Activated CD8-positive, alpha-beta T cell treated with anti-CD3 and anti-CD28 coated beads for 36 hours (primary cell): ENCODE measurements at regions of chr10 and their contacts with region 1.

Region 1: DNA sequence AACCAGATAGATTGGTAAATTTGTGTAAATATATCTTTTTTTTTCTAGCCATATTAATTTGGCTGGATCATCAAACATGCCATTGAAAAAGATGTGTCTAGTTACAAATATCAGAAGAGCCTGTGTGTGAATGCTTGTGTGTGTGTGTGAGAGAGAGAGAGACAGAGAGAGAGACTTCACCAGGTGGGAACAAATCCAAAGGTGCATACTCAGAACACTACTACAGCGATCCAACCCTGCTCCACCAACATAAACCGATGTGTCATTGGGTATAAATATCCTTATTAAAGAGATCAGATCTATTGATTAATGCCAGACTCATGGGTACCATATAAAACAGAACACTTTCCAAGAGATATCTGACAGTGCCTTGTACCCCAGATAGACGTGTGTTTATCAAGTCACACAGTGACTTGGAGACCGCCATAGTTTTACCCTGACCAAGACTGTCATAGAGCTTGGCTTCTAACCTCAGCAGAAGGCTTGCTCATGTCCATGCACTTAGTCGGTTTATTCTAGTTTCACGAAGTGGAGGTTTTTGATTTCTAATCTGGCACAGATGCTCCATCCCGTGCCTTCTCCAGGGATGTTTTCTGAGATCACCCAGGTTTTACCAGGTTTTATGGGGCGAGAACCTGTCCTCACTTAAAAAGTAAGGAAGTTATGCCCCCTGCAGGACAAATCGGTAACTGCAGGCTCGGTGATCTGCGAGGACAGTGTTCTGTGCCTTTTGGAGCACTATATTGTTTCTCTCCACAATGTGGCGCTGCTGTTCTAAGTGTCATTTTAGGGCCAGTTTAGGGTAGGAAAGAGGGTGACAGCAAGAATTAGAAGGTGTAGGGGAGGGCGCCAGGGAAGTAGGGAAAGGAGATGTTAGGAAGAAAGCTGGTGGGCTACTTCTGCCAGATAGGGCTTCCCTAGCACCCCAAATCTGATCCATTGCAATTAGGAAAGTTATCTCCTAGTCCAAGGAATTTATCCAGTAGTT is 29.3 kb upstream of the WNT8B start:
- DNase-seq: peak; percentile 100
- ATAC-seq: peak; percentile 99
- H3K4me3 Mint-ChIP-seq: no peak overlapping the region
- H3K27ac Mint-ChIP-seq: no peak overlapping the region
- H3K4me1 Mint-ChIP-seq: peaks cover 4% of the 10 kb centered on the region
- H3K27me3 Mint-ChIP-seq: no peaks in the 10 kb centered on the region
- CTCF ChIP-seq: peak; percentile 96

Region 2: GRCh38 chr10:100327007-100327717 is 106.4 kb before region 1 on chr10:
- CTCF ChIA-PET with region 1: interaction called, 292 read pairs
- POLR2A ChIA-PET with region 1: interaction called, 3 read pairs
- intact Hi-C with region 1: no loop called
- DNase-seq: peak; percentile 73
- ATAC-seq: peak; percentile 99
- H3K4me3 Mint-ChIP-seq: no peak overlapping the region
- H3K27ac Mint-ChIP-seq: peak overlapping the region; percentile 81
- H3K4me1 Mint-ChIP-seq: peaks cover 17% of the 10 kb centered on the region
- H3K27me3 Mint-ChIP-seq: no peaks in the 10 kb centered on the region
- CTCF ChIP-seq: no peak

Region 3: GRCh38 chr10:100346765-100347567 is 86.6 kb before region 1 on chr10 and contains the start of gene SCD:
- CTCF ChIA-PET with region 1: interaction called, 292 read pairs
- POLR2A ChIA-PET with region 1: interaction called, 7 read pairs
- intact Hi-C with region 1: loop called (anchors 1 kb)
- DNase-seq: peak; percentile 94
- ATAC-seq: peak; percentile 90
- H3K4me3 Mint-ChIP-seq: peak within 1 kb of the TSS; percentile 99
- H3K27ac Mint-ChIP-seq: peak within 1 kb of the TSS; percentile 94
- H3K4me1 Mint-ChIP-seq: peaks cover 50% of the 10 kb centered on the region
- H3K27me3 Mint-ChIP-seq: no peaks in the 10 kb centered on the region
- CTCF ChIP-seq: no peak
- total RNA-seq, gene SCD: 271 TPM

Region 4: DNA sequence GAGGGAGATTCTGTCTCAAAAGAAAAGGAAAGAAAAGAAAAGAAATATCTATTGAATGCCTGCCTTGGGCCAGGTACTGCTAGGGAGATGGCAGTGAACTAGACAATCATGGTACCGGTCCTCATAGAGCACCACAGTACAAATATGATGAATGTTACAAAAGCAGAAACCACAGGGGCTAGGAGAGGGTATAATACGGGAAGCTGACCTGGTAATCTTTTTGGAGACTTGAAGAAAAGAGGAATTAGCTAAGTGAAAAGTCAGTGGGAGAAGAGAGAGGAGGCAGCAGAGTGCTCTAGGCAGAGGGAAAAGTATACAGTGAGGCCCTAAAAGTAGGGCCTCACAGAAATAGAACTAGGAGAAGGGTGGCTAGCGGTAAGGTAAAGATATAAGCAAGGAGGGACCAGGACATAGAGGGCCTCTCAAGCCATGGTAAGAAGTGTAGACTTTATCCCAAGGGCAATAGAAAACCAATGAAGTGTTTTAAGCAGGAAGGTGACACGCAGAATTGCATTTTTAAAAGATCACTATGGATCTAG is 13.6 kb before region 1 on chr10:
- CTCF ChIA-PET with region 1: interaction called, 10 read pairs
- POLR2A ChIA-PET with region 1: interaction called, 3 read pairs
- intact Hi-C with region 1: no loop called
- DNase-seq: no peak
- ATAC-seq: no peak
- H3K4me3 Mint-ChIP-seq: no peak overlapping the region
- H3K27ac Mint-ChIP-seq: no peak overlapping the region
- H3K4me1 Mint-ChIP-seq: no peaks in the 10 kb centered on the region
- H3K27me3 Mint-ChIP-seq: peaks cover 2% of the 10 kb centered on the region
- CTCF ChIP-seq: no peak

Region 5: DNA sequence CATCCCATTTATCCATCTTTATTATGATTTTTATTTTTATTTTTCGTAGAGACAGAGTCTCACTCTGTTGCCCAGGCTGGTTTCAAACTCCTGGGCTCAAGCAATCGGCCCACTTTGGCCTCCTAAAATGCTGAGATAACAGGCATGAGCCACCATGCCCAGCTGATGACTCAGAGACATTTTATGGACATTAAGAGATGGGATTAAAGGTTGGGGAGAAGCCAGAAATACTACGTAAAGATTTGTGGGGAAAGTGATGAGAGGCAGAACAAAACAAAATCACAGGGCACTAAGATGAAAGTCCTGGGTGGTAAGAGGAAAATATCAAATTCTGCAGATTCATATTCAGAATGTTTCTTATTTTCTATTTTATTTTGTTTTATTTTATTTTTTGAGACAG is 36.8 kb after region 1 on chr10:
- CTCF ChIA-PET with region 1: interaction called, 22 read pairs
- POLR2A ChIA-PET with region 1: no interaction called
- intact Hi-C with region 1: no loop called
- DNase-seq: no peak
- ATAC-seq: no peak
- H3K4me3 Mint-ChIP-seq: no peak overlapping the region
- H3K27ac Mint-ChIP-seq: no peak overlapping the region
- H3K4me1 Mint-ChIP-seq: no peaks in the 10 kb centered on the region
- H3K27me3 Mint-ChIP-seq: peaks cover 3% of the 10 kb centered on the region
- CTCF ChIP-seq: no peak

Region 6: DNA sequence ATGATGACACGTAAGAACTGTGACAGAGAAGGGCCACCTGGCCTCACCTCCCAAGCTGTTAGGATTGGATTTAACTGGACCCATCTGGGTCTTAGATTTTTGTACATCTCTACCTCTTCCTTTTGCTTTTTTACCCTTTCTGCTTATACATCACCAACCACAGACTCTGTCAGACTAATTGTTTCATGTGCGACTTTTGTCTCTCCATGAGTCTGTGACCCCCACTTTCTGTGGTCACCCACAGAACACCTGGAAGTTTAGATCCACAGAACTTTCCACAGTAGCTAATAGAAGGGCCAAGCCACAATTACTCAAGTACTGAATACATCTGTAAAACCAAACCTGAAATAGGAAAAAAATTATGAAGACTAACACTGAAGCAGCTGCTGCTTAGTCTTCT is 63.0 kb after region 1 on chr10:
- CTCF ChIA-PET with region 1: interaction called, 13 read pairs
- POLR2A ChIA-PET with region 1: no interaction called
- intact Hi-C with region 1: no loop called
- DNase-seq: peak; percentile 50
- ATAC-seq: peak; percentile 60
- H3K4me3 Mint-ChIP-seq: no peak overlapping the region
- H3K27ac Mint-ChIP-seq: peak overlapping the region; percentile 23
- H3K4me1 Mint-ChIP-seq: peaks cover 17% of the 10 kb centered on the region
- H3K27me3 Mint-ChIP-seq: no peaks in the 10 kb centered on the region
- CTCF ChIP-seq: no peak

Region 7: GRCh38 chr10:100518761-100519241 is 85.3 kb after region 1 on chr10:
- CTCF ChIA-PET with region 1: interaction called, 153 read pairs
- POLR2A ChIA-PET with region 1: interaction called, 4 read pairs
- intact Hi-C with region 1: no loop called
- DNase-seq: peak; percentile 82
- ATAC-seq: peak; percentile 86
- H3K4me3 Mint-ChIP-seq: no peak overlapping the region
- H3K27ac Mint-ChIP-seq: peak overlapping the region; percentile 52
- H3K4me1 Mint-ChIP-seq: peaks cover 18% of the 10 kb centered on the region
- H3K27me3 Mint-ChIP-seq: no peaks in the 10 kb centered on the region
- CTCF ChIP-seq: peak; percentile 97

Region 8: GRCh38 chr10:100662067-100662466 is 228.5 kb after region 1 on chr10:
- CTCF ChIA-PET with region 1: no interaction called
- POLR2A ChIA-PET with region 1: no interaction called
- intact Hi-C with region 1: no loop called
- DNase-seq: no peak
- ATAC-seq: no peak
- H3K4me3 Mint-ChIP-seq: no peak overlapping the region
- H3K27ac Mint-ChIP-seq: no peak overlapping the region
- H3K4me1 Mint-ChIP-seq: peaks cover 6% of the 10 kb centered on the region
- H3K27me3 Mint-ChIP-seq: peaks cover 55% of the 10 kb centered on the region
- CTCF ChIP-seq: no peak

Region 9: DNA sequence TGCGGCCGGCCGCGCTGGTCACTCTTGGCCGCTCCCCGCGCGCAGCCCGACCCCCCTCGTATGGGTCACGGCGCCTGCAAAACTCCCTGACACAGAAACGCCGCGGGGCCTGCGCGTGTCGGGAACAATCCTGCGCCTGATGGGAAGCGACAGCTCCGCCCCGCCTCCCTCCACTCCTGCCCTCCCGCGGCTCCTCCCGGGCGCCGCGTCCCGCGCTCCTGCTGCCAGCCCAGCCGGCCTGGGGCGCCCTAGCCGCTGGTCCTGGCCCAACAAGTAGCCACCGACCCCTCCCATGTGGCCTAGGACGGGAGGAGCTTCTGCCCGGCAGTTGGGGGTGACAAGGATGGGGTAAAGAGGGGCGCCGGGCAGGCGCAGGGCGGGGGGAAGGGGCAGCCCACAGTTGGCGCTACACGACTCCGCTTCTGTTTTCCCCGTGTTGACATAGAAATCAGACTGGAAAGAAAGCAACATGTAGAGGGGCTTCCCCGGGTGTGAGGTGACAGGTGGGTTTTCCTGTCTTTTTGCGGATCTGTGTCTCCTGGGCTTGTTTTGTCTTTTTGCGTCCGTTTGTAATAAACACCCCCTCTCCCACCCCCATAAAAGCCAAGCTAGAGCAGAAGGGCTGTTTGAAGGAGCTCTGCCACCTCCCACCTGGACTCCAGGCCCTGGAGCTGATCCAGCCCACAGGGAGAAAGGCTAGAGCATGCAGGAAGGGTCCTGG is 276.8 kb after region 1 on chr10:
- CTCF ChIA-PET with region 1: no interaction called
- POLR2A ChIA-PET with region 1: no interaction called
- intact Hi-C with region 1: no loop called
- DNase-seq: no peak
- ATAC-seq: no peak
- H3K4me3 Mint-ChIP-seq: no peak overlapping the region
- H3K27ac Mint-ChIP-seq: no peak overlapping the region
- H3K4me1 Mint-ChIP-seq: peaks cover 5% of the 10 kb centered on the region
- H3K27me3 Mint-ChIP-seq: peaks cover 75% of the 10 kb centered on the region
- CTCF ChIP-seq: no peak